ENCODE measurements at regions of chr6 and their contacts with region 1.

Region 1: DNA sequence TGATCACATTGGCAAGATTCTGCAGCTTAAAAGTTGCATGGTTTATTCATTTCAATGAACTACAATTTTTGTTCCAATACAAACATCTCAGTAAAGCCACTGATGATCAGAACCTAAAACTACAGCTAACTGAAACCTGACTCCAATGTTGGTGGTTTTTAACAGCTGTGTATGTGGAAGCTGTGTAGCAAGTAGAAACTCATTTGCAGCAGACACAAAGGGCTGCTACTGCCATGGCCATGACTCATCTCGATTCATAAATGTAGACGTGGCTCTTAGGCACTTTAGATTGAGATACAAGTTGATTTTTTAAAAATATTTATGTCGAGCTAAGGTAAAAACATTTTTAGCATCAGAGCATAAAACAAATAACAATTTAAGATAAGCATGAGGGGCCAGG is 19.5 kb upstream of the MAP3K4 start:
- DNase-seq: peak; percentile 47
- H3K4me3 ChIP-seq: no peak overlapping the region
- H3K27me3 ChIP-seq: peaks cover 3% of the 10 kb centered on the region
- CTCF ChIP-seq: no peak

Region 2: DNA sequence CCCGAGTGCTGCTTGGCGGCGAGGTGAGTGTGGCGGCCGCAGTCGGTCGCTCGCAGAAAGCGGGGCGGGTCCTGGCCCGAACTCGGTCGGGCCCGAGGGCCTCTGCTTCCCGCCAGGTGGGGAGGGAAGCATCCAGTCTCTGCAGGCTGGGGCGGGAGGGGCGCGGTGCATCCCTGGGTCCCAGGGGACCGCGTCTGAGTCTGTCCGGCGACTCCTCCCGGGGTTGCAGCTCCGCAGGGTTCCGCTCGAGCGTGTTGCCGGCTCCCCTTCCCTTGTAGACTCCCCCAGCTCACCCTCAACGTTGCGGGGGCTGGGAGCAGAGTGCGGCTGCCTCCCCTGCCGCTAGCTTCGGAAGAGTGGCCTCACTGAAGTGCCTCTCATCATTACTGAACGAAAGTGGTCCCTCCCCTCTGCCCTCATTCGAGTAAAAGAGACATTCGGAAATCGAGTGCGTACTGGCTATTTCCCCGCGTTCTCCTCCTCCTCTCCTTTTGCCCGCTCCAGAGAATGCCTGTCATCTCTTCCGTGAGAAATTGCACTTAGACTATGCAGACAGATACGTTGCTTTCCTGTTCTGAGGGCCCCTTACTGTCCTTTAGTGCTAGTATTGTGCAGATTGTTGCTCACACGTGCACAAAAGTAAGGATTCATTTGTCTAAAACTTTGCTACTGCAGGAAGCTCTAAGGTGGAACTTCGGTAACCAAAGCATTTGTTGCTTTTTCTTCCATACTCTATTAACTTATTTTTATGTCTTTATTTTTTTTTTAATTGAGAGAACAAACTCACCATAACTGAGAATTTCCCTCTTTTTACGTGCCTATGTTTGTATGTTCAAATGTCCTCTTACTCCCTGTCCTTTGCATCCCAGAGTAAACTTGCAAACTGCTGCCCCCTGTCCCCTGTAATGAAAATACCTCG is 20.2 kb after region 1 on chr6:
- CTCF ChIA-PET with region 1: interaction called, 18 read pairs
- POLR2A ChIA-PET with region 1: no interaction called
- DNase-seq: no peak
- H3K4me3 ChIP-seq: peak overlapping the region; percentile 78
- H3K27me3 ChIP-seq: no peaks in the 10 kb centered on the region
- CTCF ChIP-seq: peak; percentile 76

Region 3: GRCh38 chr6:161057103-161058091 is 85.3 kb after region 1 on chr6:
- CTCF ChIA-PET with region 1: no interaction called
- POLR2A ChIA-PET with region 1: no interaction called
- DNase-seq: no peak
- H3K4me3 ChIP-seq: no peak overlapping the region
- H3K27me3 ChIP-seq: no peaks in the 10 kb centered on the region
- CTCF ChIP-seq: no peak

Region 4: DNA sequence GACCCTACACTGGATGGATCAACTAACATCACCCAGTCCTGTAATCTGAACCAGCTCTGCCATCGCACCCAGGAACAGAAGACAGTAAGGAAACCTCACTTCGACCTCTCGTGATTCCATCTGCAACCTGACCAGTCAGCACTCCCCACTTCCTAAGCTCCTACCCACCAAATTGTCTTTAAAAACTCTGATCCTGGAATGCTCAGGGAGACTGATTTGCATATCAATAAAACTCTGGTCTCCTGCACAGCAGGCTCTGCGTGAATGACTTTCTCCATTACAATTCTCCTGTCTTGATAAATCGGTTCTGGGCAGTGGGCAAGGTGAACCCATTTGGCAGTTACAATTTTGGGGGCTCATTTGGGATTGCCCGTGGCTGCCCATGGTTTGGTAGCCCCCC is 320.0 kb after region 1 on chr6:
- CTCF ChIA-PET with region 1: no interaction called
- POLR2A ChIA-PET with region 1: no interaction called
- DNase-seq: no peak
- H3K4me3 ChIP-seq: no peak overlapping the region
- H3K27me3 ChIP-seq: 0 out of 2 replicates have a peak, but pooled peaks cover 1% of the 10 kb centered on the region
- CTCF ChIP-seq: no peak

Measured in BJ (cell line).